ENCODE measurements at regions of chr19 and their contacts with region 1.

Region 1: DNA sequence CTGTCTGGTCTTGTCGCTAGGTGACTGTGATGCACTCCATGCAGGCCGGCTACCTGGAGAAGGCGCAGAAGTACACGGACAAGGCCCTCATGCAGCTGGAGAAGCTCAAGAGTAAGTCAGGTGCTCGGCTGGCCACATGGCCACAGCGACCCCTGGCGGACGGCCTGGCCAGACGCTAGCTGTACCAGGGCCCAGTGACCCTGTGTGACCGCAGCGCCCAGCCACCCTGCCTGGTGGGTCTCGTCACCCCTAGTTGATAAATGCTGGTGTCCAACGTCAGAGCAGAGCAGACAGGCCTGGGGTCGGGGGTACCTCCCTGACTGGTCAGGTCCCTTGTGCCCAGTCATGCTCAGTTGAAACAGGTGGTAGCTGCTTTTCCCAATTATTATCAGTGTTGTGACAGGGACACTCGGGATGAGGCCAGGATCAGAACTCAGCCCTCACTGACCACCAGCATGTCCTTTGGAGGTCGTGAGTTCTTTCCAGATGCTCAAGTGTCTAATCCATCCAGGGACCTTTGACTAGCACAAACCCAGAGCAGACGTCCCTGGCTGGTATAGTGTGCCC is 22.2 kb downstream of the MAU2 start:
- DNase-seq: peak; percentile 71 to 95
- H3K4me3 ChIP-seq: no peak overlapping the region
- H3K27ac ChIP-seq: no peak overlapping the region
- H3K4me1 ChIP-seq: no peaks in the 10 kb centered on the region; a peak in 1 of 7 replicates
- H3K27me3 ChIP-seq: no peaks in the 10 kb centered on the region
- CTCF ChIP-seq: peak; percentile 91 to 99 (median 99)
- EP300 ChIP-seq: no peak
- POLR2A ChIP-seq: no peak
- RAD21 ChIP-seq: peak; percentile 75 to 78

Region 2: GRCh38 chr19:19304186-19304965 is 38.5 kb before region 1 on chr19:
- CTCF ChIA-PET with region 1: interaction called, 12 read pairs
- POLR2A ChIA-PET with region 1: no interaction called
- DNase-seq: no peak
- H3K4me3 ChIP-seq: no peak overlapping the region
- H3K27ac ChIP-seq: no peak overlapping the region
- H3K4me1 ChIP-seq: no peaks in the 10 kb centered on the region
- H3K27me3 ChIP-seq: no peaks in the 10 kb centered on the region
- CTCF ChIP-seq: no peak
- EP300 ChIP-seq: no peak
- POLR2A ChIP-seq: no peak
- RAD21 ChIP-seq: no peak

Region 3: GRCh38 chr19:19320362-19321142 is 22.3 kb before region 1 on chr19 and contains the starts of genes MAU2 and SUGP1:
- CTCF ChIA-PET with region 1: interaction called, 17 read pairs
- POLR2A ChIA-PET with region 1: interaction called, 5 read pairs
- DNase-seq: peak; percentile 73 to 89
- H3K4me3 ChIP-seq: peak within 1 kb of the TSS; percentile 79 to 96 (median 88)
- H3K27ac ChIP-seq: peak within 1 kb of the TSS; percentile 98
- H3K4me1 ChIP-seq: peaks cover 0 to 5% (median 4%) of the 10 kb centered on the region in 4 experiments; a peak in 3 of 7 replicates
- H3K27me3 ChIP-seq: no peaks in the 10 kb centered on the region
- CTCF ChIP-seq: no peak
- EP300 ChIP-seq: 0 out of 3 replicates have a peak, but pooled peaks of 1 of the 2 experiments have one; percentile 37
- POLR2A ChIP-seq: peak; percentile 81 to 99
- RAD21 ChIP-seq: no peak
- total RNA-seq, gene MAU2: 40.8 TPM in 2 replicates
- total RNA-seq, gene SUGP1: 65.2 and 70.5 TPM in 2 replicates

Region 4: DNA sequence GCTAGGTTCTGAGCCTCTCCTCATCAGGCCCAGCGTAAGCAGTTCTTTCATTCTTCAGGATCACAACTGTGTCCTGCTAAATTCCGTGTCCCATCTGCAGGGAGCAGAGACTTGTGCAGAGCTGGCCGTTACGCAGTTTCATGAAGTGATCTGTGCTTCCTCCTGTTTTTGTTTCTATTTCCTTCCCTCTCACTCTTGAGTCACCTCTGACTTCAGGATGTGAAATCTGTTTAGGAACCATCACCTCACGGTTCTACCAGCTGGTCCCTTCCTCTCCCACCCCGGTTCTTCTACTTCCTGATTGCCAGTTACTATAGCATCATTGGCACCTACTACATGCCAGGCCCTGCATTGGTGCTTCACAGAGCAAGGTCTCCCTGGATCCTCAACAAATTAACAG is 13.7 kb before region 1 on chr19:
- CTCF ChIA-PET with region 1: interaction called, 56 read pairs
- POLR2A ChIA-PET with region 1: interaction called, 9 read pairs
- DNase-seq: no peak
- H3K4me3 ChIP-seq: no peak overlapping the region
- H3K27ac ChIP-seq: no peak overlapping the region
- H3K4me1 ChIP-seq: no peaks in the 10 kb centered on the region
- H3K27me3 ChIP-seq: no peaks in the 10 kb centered on the region
- CTCF ChIP-seq: no peak
- EP300 ChIP-seq: no peak
- POLR2A ChIP-seq: no peak
- RAD21 ChIP-seq: no peak

Region 5: GRCh38 chr19:19354932-19355331 is 12.1 kb after region 1 on chr19:
- CTCF ChIA-PET with region 1: interaction called, 24 read pairs
- POLR2A ChIA-PET with region 1: interaction called, 6 read pairs
- DNase-seq: no peak
- H3K4me3 ChIP-seq: no peak overlapping the region
- H3K27ac ChIP-seq: no peak overlapping the region
- H3K4me1 ChIP-seq: no peaks in the 10 kb centered on the region
- H3K27me3 ChIP-seq: no peaks in the 10 kb centered on the region
- CTCF ChIP-seq: no peak
- EP300 ChIP-seq: no peak
- POLR2A ChIP-seq: no peak
- RAD21 ChIP-seq: no peak

Measured in H1 (cell line).